H1 (cell line): ENCODE measurements at regions of chr1 and their contacts with region 1.

Region 1: GRCh38 chr1:147273409-147274336 is 31.2 kb downstream of the CHD1L start:
- DNase-seq: no peak
- H3K4me3 ChIP-seq: no peak overlapping the region
- H3K27ac ChIP-seq: no peak overlapping the region
- H3K4me1 ChIP-seq: no peaks in the 10 kb centered on the region
- H3K27me3 ChIP-seq: no peaks in the 10 kb centered on the region
- CTCF ChIP-seq: peak in 2 of 3 experiments; percentile 52 to 53; a peak in 2 of 4 replicates
- EP300 ChIP-seq: no peak
- POLR2A ChIP-seq: no peak
- RAD21 ChIP-seq: peak; percentile 80

Region 2: DNA sequence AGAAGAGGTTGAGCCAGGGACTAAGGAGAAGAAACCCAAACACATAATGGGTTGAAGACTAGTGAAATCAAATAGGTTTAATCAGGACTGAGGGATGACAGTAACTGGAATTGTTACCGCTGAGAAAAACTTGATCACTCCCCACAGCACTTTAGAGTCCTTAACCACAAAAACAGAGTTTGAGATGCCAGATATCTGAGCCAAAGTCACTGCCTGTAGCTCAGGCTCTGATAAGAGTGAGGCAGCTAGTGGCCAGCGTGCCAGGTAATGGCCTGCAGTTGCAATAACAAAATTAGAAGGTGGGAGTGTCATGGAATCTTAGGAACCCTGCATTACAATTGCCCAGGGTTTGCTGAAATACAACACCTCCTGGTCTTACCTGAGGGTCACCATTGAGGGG is 149.4 kb before region 1 on chr1:
- CTCF ChIA-PET with region 1: no interaction called
- POLR2A ChIA-PET with region 1: no interaction called
- DNase-seq: no peak
- H3K4me3 ChIP-seq: no peak overlapping the region
- H3K27ac ChIP-seq: no peak overlapping the region
- H3K4me1 ChIP-seq: peaks cover 0 to 5% (median 0%) of the 10 kb centered on the region in 4 experiments; a peak in 3 of 7 replicates
- H3K27me3 ChIP-seq: no peaks in the 10 kb centered on the region
- CTCF ChIP-seq: no peak
- EP300 ChIP-seq: no peak
- POLR2A ChIP-seq: no peak
- RAD21 ChIP-seq: no peak

Region 3: DNA sequence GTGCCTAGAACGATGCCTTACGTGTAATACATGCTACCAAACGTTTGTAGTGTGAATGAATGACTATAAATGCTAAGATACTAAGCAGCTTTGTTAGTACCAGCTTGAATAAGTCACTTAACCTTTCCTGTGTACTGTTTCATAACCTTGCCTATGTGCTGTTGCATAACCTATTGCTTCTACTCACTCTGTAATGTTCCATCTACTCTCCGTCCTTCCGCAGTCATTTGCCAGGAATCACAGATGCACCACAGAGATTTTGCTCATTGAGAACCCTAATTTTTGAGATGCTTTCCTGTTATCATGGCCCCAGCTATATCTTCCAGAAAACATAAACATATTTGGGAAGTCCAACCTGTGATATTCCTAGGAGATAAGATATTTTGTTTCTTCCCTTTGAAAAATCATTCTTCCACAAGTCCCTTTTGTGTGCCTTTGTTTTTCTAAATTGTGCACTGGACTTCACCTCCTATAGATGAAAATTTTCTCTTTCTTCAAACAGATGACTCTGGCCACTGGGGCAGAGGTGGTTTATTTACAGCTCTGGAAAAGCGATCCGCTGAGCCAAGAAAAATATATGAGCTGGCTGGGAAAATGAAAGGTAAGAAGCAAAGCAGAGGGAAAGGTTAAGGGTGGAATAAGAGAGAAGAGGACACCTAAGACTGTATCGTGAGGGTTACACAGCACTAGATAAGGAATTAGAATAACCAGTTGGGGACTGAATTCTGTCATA is 13.6 kb after region 1 on chr1:
- CTCF ChIA-PET with region 1: interaction called, 11 read pairs
- POLR2A ChIA-PET with region 1: no interaction called
- DNase-seq: no peak
- H3K4me3 ChIP-seq: no peak overlapping the region
- H3K27ac ChIP-seq: no peak overlapping the region
- H3K4me1 ChIP-seq: no peaks in the 10 kb centered on the region
- H3K27me3 ChIP-seq: no peaks in the 10 kb centered on the region
- CTCF ChIP-seq: no peak
- EP300 ChIP-seq: no peak
- POLR2A ChIP-seq: no peak
- RAD21 ChIP-seq: no peak

Region 4: DNA sequence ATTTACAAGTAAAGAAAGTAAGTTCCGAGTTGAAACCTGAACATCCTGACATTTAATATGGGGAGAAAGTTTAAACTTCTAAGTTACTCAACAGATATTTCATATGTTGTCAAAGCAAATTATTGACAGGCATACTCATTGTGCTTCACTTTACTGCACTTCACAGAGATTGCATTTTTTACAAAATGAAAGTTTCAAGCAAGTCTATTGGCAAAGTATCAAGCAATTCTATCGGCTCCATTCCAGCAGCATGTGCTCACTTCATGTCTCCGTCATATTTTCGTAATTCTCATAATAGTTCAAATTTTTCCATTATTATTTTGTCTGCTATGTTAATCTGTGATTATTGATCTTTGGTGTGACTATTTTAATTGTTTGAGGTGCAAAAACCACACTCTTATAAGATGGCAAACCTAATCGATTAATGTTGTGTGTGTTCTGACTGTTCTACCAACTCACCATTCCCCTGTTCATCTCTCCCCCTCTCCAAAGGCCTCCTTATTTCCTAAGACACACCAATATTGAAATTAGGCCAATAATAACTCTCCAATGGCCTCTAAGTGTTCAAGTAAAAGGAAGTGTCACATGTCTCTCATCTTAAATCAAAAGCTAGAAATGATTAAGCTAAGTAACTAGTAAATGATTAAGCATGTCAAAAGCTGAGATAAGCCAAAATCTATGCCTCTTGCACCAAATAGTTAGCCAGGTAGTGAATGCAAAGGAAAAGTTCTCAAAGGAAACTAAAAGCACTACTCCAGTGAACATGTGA is 199.5 kb after region 1 on chr1:
- CTCF ChIA-PET with region 1: interaction called, 10 read pairs
- POLR2A ChIA-PET with region 1: no interaction called
- DNase-seq: no peak
- H3K4me3 ChIP-seq: no peak overlapping the region
- H3K27ac ChIP-seq: no peak overlapping the region
- H3K4me1 ChIP-seq: no peaks in the 10 kb centered on the region
- H3K27me3 ChIP-seq: no peaks in the 10 kb centered on the region
- CTCF ChIP-seq: no peak
- EP300 ChIP-seq: no peak
- POLR2A ChIP-seq: no peak
- RAD21 ChIP-seq: no peak